ENCODE measurements at regions of chr12 and their contacts with region 1.

Region 1: GRCh38 chr12:50504798-50505385 is at the start of gene DIP2B:
- DNase-seq: peak; percentile 89
- H3K4me3 ChIP-seq: peak within 1 kb of the TSS; percentile 73 to 97 (median 92)
- H3K27ac ChIP-seq: peak within 1 kb of the TSS; percentile 95
- H3K4me1 ChIP-seq: peaks cover 23% of the 10 kb centered on the region
- H3K27me3 ChIP-seq: no peaks in the 10 kb centered on the region
- CTCF ChIP-seq: peak; percentile 88 to 92
- total RNA-seq, gene DIP2B: 34.8 to 98.0 TPM

Region 2: GRCh38 chr12:50533203-50533584 is 28.3 kb after region 1 on chr12:
- CTCF ChIA-PET with region 1: interaction called, 8 read pairs
- dilution Hi-C with region 1: no loop called
- in situ Hi-C with region 1: no loop called
- intact Hi-C with region 1: loop called (anchors 1 kb)
- DNase-seq: no peak
- H3K4me3 ChIP-seq: no peak overlapping the region
- H3K27ac ChIP-seq: peak overlapping the region; percentile 98
- H3K4me1 ChIP-seq: peaks cover 53% of the 10 kb centered on the region
- H3K27me3 ChIP-seq: no peaks in the 10 kb centered on the region
- CTCF ChIP-seq: no peak

Region 3: DNA sequence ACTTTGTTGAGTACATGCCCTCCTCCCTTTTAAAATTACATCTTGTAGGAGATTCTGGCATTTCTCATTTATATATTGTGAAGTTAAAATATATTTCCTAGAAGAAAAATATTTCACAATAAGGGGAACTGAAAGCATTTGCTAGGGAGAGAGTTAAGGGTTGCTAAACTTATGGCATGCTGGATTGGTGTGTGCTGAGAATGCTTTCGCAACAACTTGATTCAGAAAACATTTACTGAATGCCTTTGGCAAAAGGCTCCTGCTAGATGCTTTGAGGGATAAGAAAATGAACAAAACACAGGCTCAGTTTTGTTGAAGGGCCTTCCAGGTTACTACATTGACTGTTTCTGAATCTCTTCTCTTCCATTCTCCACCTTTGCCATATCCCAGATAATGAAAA is 67.4 kb after region 1 on chr12:
- CTCF ChIA-PET with region 1: no interaction called
- dilution Hi-C with region 1: no loop called
- in situ Hi-C with region 1: loop called in 1 of 2 experiments (anchors 5 kb)
- intact Hi-C with region 1: loop called (anchors 2 kb)
- DNase-seq: peak; percentile 78
- H3K4me3 ChIP-seq: no peak overlapping the region
- H3K27ac ChIP-seq: peak overlapping the region; percentile 26
- H3K4me1 ChIP-seq: peaks cover 35% of the 10 kb centered on the region
- H3K27me3 ChIP-seq: no peaks in the 10 kb centered on the region
- CTCF ChIP-seq: no peak

Region 4: GRCh38 chr12:50637870-50638481 is 133.1 kb after region 1 on chr12:
- CTCF ChIA-PET with region 1: interaction called, 3 read pairs
- dilution Hi-C with region 1: no loop called
- in situ Hi-C with region 1: loop called (anchors 5 kb)
- intact Hi-C with region 1: loop called (anchors 1 kb)
- DNase-seq: peak; percentile 45
- H3K4me3 ChIP-seq: no peak overlapping the region
- H3K27ac ChIP-seq: peak overlapping the region; percentile 6
- H3K4me1 ChIP-seq: peaks cover 35% of the 10 kb centered on the region
- H3K27me3 ChIP-seq: no peaks in the 10 kb centered on the region
- CTCF ChIP-seq: peak; percentile 59

Region 5: DNA sequence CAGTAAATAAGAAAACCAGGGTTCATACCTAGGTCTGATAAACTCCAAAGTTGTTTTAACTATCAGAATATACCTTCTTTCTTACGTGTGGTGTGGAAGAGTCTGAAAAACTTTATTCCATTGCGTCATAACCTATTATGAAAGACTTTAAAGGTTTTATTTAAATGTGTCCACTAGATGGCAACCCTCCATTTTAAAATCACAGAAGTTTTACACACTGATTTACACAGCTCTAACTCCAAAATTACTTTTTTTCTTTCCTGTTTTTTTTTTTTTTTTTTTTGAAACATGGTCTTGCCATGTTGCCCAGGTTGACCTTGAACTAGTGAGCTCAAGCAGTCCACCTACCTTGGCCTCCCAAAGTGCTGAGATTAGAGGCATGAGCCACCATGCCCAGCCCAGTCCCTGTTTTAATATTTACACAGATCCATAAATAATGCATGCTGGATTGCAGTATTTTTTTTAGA is 320.5 kb after region 1 on chr12:
- CTCF ChIA-PET with region 1: no interaction called
- dilution Hi-C with region 1: no loop called
- in situ Hi-C with region 1: no loop called
- intact Hi-C with region 1: loop called (anchors 10 kb)
- DNase-seq: peak; percentile 43
- H3K4me3 ChIP-seq: no peak overlapping the region
- H3K27ac ChIP-seq: no peak overlapping the region
- H3K4me1 ChIP-seq: peaks cover 9% of the 10 kb centered on the region
- H3K27me3 ChIP-seq: no peaks in the 10 kb centered on the region
- CTCF ChIP-seq: peak; percentile 32 to 37

Region 6: GRCh38 chr12:51047655-51048540 is 543.0 kb after region 1 on chr12 and contains the start of gene LETMD1:
- CTCF ChIA-PET with region 1: no interaction called
- dilution Hi-C with region 1: no loop called
- in situ Hi-C with region 1: no loop called
- intact Hi-C with region 1: loop called (anchors 5 kb)
- DNase-seq: peak; percentile 98
- H3K4me3 ChIP-seq: peak within 1 kb of the TSS; percentile 79 to 90 (median 80)
- H3K27ac ChIP-seq: peak within 1 kb of the TSS; percentile 53
- H3K4me1 ChIP-seq: peaks cover 9% of the 10 kb centered on the region
- H3K27me3 ChIP-seq: no peaks in the 10 kb centered on the region
- CTCF ChIP-seq: peak; percentile 88 to 96
- total RNA-seq, gene LETMD1: 40.8 to 54.9 TPM

Measured in mammary epithelial cell (primary cell).